ENCODE measurements at regions of chr9 and their contacts with region 1.

Region 1: GRCh38 chr9:7554699-7555098 is 244.9 kb downstream of the DMAC1 start:
- DNase-seq: no peak
- ATAC-seq: no peak
- H3K4me3 Mint-ChIP-seq: no peak overlapping the region
- H3K27ac Mint-ChIP-seq: no peak overlapping the region
- H3K4me1 Mint-ChIP-seq: no peaks in the 10 kb centered on the region
- H3K27me3 Mint-ChIP-seq: peaks cover 4% of the 10 kb centered on the region

Region 2: GRCh38 chr9:7123743-7124142 is 431.0 kb before region 1 on chr9:
- CTCF ChIA-PET with region 1: no interaction called
- POLR2A ChIA-PET with region 1: no interaction called
- intact Hi-C with region 1: no loop called
- DNase-seq: no peak
- ATAC-seq: peak; percentile 49
- H3K4me3 Mint-ChIP-seq: no peak overlapping the region
- H3K27ac Mint-ChIP-seq: no peak overlapping the region
- H3K4me1 Mint-ChIP-seq: peaks cover 18% of the 10 kb centered on the region
- H3K27me3 Mint-ChIP-seq: no peaks in the 10 kb centered on the region

Region 3: DNA sequence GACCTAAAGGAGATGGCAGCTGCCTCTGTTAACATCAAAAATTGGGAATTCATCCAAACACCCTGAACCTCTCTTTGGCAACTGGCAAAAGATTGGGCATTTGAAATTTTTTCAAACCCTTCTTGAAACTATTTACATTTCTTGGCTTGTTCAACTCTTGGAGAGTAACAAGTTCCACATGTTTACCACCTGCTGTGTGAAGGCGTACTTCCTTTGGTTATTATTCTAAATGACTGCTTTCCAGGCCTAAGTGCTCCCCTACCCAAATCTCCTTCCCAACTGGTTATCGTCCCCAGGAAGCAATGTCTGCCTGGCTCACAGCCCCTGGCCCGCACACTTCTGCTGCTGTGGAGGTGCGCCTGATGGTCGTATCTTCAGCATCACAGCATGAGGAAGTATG is 177.9 kb before region 1 on chr9:
- CTCF ChIA-PET with region 1: no interaction called
- POLR2A ChIA-PET with region 1: no interaction called
- intact Hi-C with region 1: no loop called
- DNase-seq: no peak
- ATAC-seq: no peak
- H3K4me3 Mint-ChIP-seq: no peak overlapping the region
- H3K27ac Mint-ChIP-seq: no peak overlapping the region
- H3K4me1 Mint-ChIP-seq: no peaks in the 10 kb centered on the region
- H3K27me3 Mint-ChIP-seq: peaks cover 5% of the 10 kb centered on the region

Region 4: GRCh38 chr9:7947577-7947976 is 392.9 kb after region 1 on chr9:
- CTCF ChIA-PET with region 1: no interaction called
- POLR2A ChIA-PET with region 1: no interaction called
- intact Hi-C with region 1: loop called in 1 of 2 experiments (anchors 5 kb)
- DNase-seq: no peak
- ATAC-seq: no peak
- H3K4me3 Mint-ChIP-seq: no peak overlapping the region
- H3K27ac Mint-ChIP-seq: no peak overlapping the region
- H3K4me1 Mint-ChIP-seq: peaks cover 3% of the 10 kb centered on the region
- H3K27me3 Mint-ChIP-seq: no peaks in the 10 kb centered on the region

Region 5: DNA sequence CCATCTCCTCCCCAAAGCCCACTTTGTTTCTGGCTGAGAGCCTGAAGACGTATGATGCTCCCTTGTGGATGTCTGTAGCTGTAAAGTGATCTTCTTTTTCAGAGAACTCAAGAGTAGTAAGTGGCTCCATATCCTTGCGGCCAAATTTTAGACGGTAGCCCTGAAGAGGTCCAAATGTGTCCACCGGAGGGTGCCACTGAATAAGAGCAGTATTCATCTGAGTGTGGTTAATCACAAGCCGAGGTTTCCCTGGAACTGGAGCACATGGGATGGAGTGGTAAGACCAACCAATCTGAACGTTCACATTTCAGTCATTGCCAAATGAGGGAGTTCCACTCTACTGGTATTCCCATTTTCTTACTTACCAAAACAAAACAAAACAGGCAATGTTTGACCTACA is 931.4 kb after region 1 on chr9:
- CTCF ChIA-PET with region 1: no interaction called
- POLR2A ChIA-PET with region 1: no interaction called
- intact Hi-C with region 1: no loop called
- DNase-seq: peak; percentile 27
- ATAC-seq: no peak
- H3K4me3 Mint-ChIP-seq: no peak overlapping the region
- H3K27ac Mint-ChIP-seq: no peak overlapping the region
- H3K4me1 Mint-ChIP-seq: no peaks in the 10 kb centered on the region
- H3K27me3 Mint-ChIP-seq: no peaks in the 10 kb centered on the region

Measured in activated CD4-positive, alpha-beta T cell treated with anti-CD3 and anti-CD28 coated beads for 36 hours (primary cell).